ENCODE measurements at regions of chr11 and their contacts with region 1.

Region 1: GRCh38 chr11:8099291-8099899 is 18.4 kb downstream of the TUB start:
- DNase-seq: peak; percentile 46
- H3K4me3 ChIP-seq: no peak overlapping the region
- CTCF ChIP-seq: peak; percentile 88

Region 2: DNA sequence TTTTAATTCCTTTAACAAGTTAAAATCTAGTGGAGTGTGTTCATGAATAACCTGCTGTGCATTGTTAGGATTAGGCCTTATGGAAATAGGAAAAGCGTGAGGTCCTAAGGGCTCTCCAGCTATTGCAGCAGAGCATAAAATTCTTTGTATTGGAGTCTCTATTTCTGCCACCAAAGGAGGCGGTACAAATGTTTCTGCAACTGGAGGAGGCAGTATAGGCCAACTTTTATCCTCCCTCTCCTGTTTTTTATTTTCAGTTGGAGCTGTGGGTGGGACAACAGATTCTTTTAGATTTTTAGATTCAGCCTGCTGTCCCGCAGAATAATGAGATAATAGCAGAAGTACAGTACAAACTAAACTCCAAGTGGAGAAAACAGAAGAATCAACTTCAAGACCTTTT is 194.5 kb before region 1 on chr11:
- CTCF ChIA-PET with region 1: interaction called, 38 read pairs
- POLR2A ChIA-PET with region 1: no interaction called
- DNase-seq: no peak
- H3K4me3 ChIP-seq: no peak overlapping the region
- CTCF ChIP-seq: peak; percentile 28

Region 3: GRCh38 chr11:8006349-8006977 is 92.9 kb before region 1 on chr11:
- CTCF ChIA-PET with region 1: interaction called, 1,552 read pairs
- POLR2A ChIA-PET with region 1: interaction called, 16 read pairs
- DNase-seq: peak; percentile 21
- H3K4me3 ChIP-seq: no peak overlapping the region
- CTCF ChIP-seq: peak; percentile 89

Region 4: GRCh38 chr11:8033305-8034105 is 65.9 kb before region 1 on chr11:
- CTCF ChIA-PET with region 1: interaction called, 694 read pairs
- POLR2A ChIA-PET with region 1: interaction called, 3 read pairs
- DNase-seq: no peak
- H3K4me3 ChIP-seq: no peak overlapping the region
- CTCF ChIP-seq: peak; percentile 90

Region 5: GRCh38 chr11:8070417-8071115 is 28.8 kb before region 1 on chr11:
- CTCF ChIA-PET with region 1: interaction called, 126 read pairs
- POLR2A ChIA-PET with region 1: no interaction called
- DNase-seq: no peak
- H3K4me3 ChIP-seq: no peak overlapping the region
- CTCF ChIP-seq: peak; percentile 23

Region 6: GRCh38 chr11:8138526-8138925 is 39.1 kb after region 1 on chr11:
- CTCF ChIA-PET with region 1: no interaction called
- POLR2A ChIA-PET with region 1: no interaction called
- DNase-seq: no peak
- H3K4me3 ChIP-seq: no peak overlapping the region
- CTCF ChIP-seq: no peak

Region 7: GRCh38 chr11:8233691-8234424 is 134.5 kb after region 1 on chr11:
- CTCF ChIA-PET with region 1: no interaction called
- POLR2A ChIA-PET with region 1: no interaction called
- DNase-seq: no peak
- H3K4me3 ChIP-seq: no peak overlapping the region
- CTCF ChIP-seq: no peak

Measured in AG04449 (cell line).